B cell (primary cell): ENCODE measurements at regions of chr1 and their contacts with region 1.

Region 1: GRCh38 chr1:225428068-225428880 is 436 bp upstream of the LBR start:
- DNase-seq: peak; percentile 92
- ATAC-seq: peak; percentile 90
- H3K4me3 ChIP-seq: peak overlapping the region; percentile 74 to 93 (median 91)
- H3K4me3 Mint-ChIP-seq: peak overlapping the region; percentile 85
- H3K27ac ChIP-seq: peak overlapping the region; percentile 78 to 83
- H3K27ac Mint-ChIP-seq: peak overlapping the region; percentile 80
- H3K4me1 ChIP-seq: peaks cover 36 to 41% of the 10 kb centered on the region in 2 donors
- H3K4me1 Mint-ChIP-seq: peaks cover 45% of the 10 kb centered on the region
- H3K27me3 ChIP-seq: no peaks in the 10 kb centered on the region
- H3K27me3 Mint-ChIP-seq: no peaks in the 10 kb centered on the region
- CTCF ChIP-seq: no peak

Region 2: GRCh38 chr1:225318706-225319575 is 109.3 kb before region 1 on chr1:
- CTCF ChIA-PET with region 1: interaction called, 4 read pairs
- POLR2A ChIA-PET with region 1: no interaction called
- intact Hi-C with region 1: loop called (anchors 5 kb)
- DNase-seq: peak; percentile 46
- ATAC-seq: peak; percentile 33
- H3K4me3 ChIP-seq: no peak overlapping the region
- H3K4me3 Mint-ChIP-seq: no peak overlapping the region
- H3K27ac ChIP-seq: no peak overlapping the region
- H3K27ac Mint-ChIP-seq: no peak overlapping the region
- H3K4me1 ChIP-seq: no peaks in the 10 kb centered on the region
- H3K4me1 Mint-ChIP-seq: no peaks in the 10 kb centered on the region
- H3K27me3 ChIP-seq: peaks cover 0 to 5% (median 0%) of the 10 kb centered on the region in 4 experiments
- H3K27me3 Mint-ChIP-seq: peaks cover 7% of the 10 kb centered on the region
- CTCF ChIP-seq: peak; percentile 79

Region 3: GRCh38 chr1:225467193-225468020 is 39.1 kb after region 1 on chr1:
- CTCF ChIA-PET with region 1: interaction called, 8 read pairs
- POLR2A ChIA-PET with region 1: interaction called, 37 read pairs
- intact Hi-C with region 1: loop called (anchors 1 kb)
- DNase-seq: peak; percentile 92
- ATAC-seq: peak; percentile 88
- H3K4me3 ChIP-seq: peak overlapping the region; percentile 68 to 83 (median 73)
- H3K4me3 Mint-ChIP-seq: peak overlapping the region; percentile 91
- H3K27ac ChIP-seq: peak overlapping the region; percentile 82 to 97
- H3K27ac Mint-ChIP-seq: peak overlapping the region; percentile 97
- H3K4me1 ChIP-seq: peaks cover 15 to 34% of the 10 kb centered on the region in 2 donors
- H3K4me1 Mint-ChIP-seq: peaks cover 37% of the 10 kb centered on the region
- H3K27me3 ChIP-seq: no peaks in the 10 kb centered on the region
- H3K27me3 Mint-ChIP-seq: no peaks in the 10 kb centered on the region
- CTCF ChIP-seq: no peak

Region 4: DNA sequence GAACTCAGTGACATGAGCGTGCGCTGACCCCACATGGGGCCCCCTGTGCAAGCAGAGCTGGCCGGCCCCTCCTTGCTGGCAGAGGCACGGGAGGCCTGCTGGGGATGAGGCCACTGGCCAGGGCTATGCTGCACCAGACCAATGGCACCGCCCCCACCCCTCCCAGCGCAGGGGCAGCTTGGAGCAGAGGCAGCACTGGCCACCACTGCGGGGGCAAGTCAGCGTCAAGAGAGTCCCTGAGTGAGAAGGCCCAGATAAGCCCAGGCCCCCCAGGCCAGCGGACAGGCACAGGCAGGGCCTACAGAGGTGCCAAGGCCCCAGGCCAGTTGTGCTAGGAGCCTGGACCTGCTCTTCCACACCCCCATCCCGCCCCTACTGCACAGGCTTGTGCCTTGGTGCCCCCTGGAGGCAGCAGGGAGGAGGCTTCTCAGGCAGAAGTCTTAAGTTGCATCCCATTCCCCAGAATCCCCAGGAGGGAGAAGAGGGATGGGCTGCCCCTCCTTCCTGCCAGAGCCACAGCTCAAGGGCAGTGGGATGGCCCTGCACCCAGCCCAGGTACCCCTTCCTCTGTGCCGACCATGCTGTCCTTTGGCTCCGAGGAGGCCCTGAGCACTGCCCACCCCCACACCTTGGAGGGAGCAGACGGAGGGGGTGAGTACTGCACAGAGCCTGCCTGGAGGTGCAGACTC is 417.4 kb after region 1 on chr1:
- CTCF ChIA-PET with region 1: no interaction called
- POLR2A ChIA-PET with region 1: no interaction called
- intact Hi-C with region 1: loop called (anchors 5 kb)
- DNase-seq: no peak
- ATAC-seq: no peak
- H3K4me3 ChIP-seq: no peak overlapping the region
- H3K4me3 Mint-ChIP-seq: no peak overlapping the region
- H3K27ac ChIP-seq: peak overlapping the region in 1 of 2 donors; percentile 87
- H3K27ac Mint-ChIP-seq: peak overlapping the region; percentile 98
- H3K4me1 ChIP-seq: peaks cover 41 to 47% of the 10 kb centered on the region in 2 donors
- H3K4me1 Mint-ChIP-seq: peaks cover 47% of the 10 kb centered on the region
- H3K27me3 ChIP-seq: no peaks in the 10 kb centered on the region
- H3K27me3 Mint-ChIP-seq: no peaks in the 10 kb centered on the region
- CTCF ChIP-seq: no peak

Region 5: DNA sequence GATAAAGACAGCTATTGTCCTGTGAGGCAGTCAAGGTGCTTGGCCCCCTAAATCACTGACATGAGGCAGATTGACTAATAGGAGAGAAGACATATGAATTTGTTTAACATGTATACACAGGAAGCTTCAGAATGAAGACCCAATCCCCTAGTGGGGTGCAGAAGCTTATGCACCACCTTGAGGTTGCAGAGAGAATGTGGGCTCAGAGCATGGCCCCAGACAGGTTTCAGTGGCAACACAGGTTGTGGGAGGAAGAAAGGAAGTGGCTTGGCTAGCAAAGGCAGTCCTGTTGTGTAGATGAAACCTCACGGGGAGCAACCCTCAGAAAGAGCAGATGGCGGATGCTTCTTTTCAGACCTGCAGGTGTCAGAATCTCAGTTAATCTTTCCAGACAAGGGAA is 1016.6 kb after region 1 on chr1:
- CTCF ChIA-PET with region 1: no interaction called
- POLR2A ChIA-PET with region 1: interaction called, 11 read pairs
- intact Hi-C with region 1: no loop called
- DNase-seq: peak; percentile 74
- ATAC-seq: peak; percentile 97
- H3K4me3 ChIP-seq: no peak overlapping the region
- H3K4me3 Mint-ChIP-seq: peak overlapping the region; percentile 46
- H3K27ac ChIP-seq: peak overlapping the region; percentile 8 to 20
- H3K27ac Mint-ChIP-seq: peak overlapping the region; percentile 78
- H3K4me1 ChIP-seq: peaks cover 23% of the 10 kb centered on the region in 2 donors
- H3K4me1 Mint-ChIP-seq: peaks cover 23% of the 10 kb centered on the region
- H3K27me3 ChIP-seq: no peaks in the 10 kb centered on the region
- H3K27me3 Mint-ChIP-seq: no peaks in the 10 kb centered on the region
- CTCF ChIP-seq: peak; percentile 38